Heart right ventricle (tissue), 16 donors: ENCODE measurements at regions of chr2 and their contacts with region 1.

Region 1: GRCh38 chr2:179440642-179441251 is 176.1 kb upstream of the SESTD1 start:
- DNase-seq: no peak
- ATAC-seq: peak in 1 of 8 donors; percentile 15
- H3K4me3 ChIP-seq: no peak overlapping the region
- H3K27ac ChIP-seq: no peak overlapping the region
- H3K4me1 ChIP-seq: peaks cover 0 to 14% (median 0%) of the 10 kb centered on the region in 9 donors
- H3K27me3 ChIP-seq: peaks cover 0 to 8% (median 0%) of the 10 kb centered on the region in 7 donors
- CTCF ChIP-seq: peak in 8 of 9 donors; percentile 36 to 74 (median 65)

Region 2: DNA sequence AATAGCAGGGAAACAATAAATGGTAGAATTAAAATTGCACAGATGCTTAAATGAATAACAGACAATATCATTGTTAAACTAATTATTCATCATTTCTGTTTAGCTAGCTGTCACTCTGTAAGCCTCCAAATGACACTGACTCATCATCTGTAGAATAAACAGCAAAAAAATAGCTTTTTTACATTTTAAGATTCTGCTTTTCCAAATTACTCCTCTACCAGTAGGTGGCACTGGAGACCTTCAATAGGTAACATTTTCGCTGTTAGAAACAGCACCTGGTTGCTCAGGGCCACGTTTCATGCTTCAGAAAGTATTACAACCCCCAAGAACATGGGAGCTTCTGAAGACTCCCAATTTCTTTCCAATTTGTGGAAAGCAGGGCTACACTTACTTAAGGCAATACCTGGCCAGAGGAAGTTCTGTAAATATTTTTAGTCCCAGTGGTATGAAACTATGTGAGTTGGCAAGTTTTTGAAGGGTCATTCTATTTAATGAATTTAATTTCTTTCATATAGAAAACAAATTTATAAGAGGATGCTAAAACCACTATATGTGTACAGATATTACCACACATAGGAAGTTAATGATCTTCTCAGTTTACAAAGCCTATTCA is 678.9 kb before region 1 on chr2:
- intact Hi-C with region 1: loop called in 1 of 10 experiments (anchors 10 kb)
- DNase-seq: no peak
- ATAC-seq: no peak
- H3K4me3 ChIP-seq: no peak overlapping the region
- H3K27ac ChIP-seq: no peak overlapping the region
- H3K4me1 ChIP-seq: peaks cover 0 to 35% (median 0%) of the 10 kb centered on the region in 9 donors
- H3K27me3 ChIP-seq: no peaks in the 10 kb centered on the region
- CTCF ChIP-seq: peak; percentile 13 to 70 (median 61)